ENCODE measurements at regions of chr1 and their contacts with region 1.

Region 1: GRCh38 chr1:206469933-206470691 is at the start of gene IKBKE:
- DNase-seq: peak; percentile 84
- ATAC-seq: peak; percentile 72
- H3K4me3 Mint-ChIP-seq: peak within 1 kb of the TSS; percentile 91
- H3K27ac Mint-ChIP-seq: peak within 1 kb of the TSS; percentile 92
- H3K4me1 Mint-ChIP-seq: peaks cover 88% of the 10 kb centered on the region
- H3K27me3 Mint-ChIP-seq: no peaks in the 10 kb centered on the region
- total RNA-seq, gene IKBKE: 64.8 to 72.7 TPM

Region 2: DNA sequence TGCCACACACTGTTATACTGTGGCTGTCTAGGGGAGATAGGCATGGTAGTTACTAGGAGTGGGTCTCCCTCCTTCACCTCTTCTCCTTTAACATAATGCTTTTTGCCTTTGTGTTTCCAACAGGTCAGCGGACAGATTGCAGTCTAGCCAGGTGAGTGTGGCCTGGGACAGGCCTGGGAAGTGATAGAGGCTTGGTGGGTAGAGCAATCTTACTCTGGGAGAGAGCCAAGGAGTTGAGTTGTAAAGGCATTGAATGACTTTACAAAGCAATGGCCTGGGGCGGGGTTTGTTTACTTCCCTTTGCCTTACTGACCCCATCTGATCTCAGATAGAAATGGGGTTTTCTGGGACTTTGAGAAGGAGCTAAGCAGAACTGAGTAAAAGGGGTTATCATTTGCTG is 50.9 kb before region 1 on chr1:
- CTCF ChIA-PET with region 1: no interaction called
- DNase-seq: peak; percentile 11
- ATAC-seq: no peak
- H3K4me3 Mint-ChIP-seq: no peak overlapping the region
- H3K27ac Mint-ChIP-seq: no peak overlapping the region
- H3K4me1 Mint-ChIP-seq: no peaks in the 10 kb centered on the region
- H3K27me3 Mint-ChIP-seq: no peaks in the 10 kb centered on the region

Region 3: DNA sequence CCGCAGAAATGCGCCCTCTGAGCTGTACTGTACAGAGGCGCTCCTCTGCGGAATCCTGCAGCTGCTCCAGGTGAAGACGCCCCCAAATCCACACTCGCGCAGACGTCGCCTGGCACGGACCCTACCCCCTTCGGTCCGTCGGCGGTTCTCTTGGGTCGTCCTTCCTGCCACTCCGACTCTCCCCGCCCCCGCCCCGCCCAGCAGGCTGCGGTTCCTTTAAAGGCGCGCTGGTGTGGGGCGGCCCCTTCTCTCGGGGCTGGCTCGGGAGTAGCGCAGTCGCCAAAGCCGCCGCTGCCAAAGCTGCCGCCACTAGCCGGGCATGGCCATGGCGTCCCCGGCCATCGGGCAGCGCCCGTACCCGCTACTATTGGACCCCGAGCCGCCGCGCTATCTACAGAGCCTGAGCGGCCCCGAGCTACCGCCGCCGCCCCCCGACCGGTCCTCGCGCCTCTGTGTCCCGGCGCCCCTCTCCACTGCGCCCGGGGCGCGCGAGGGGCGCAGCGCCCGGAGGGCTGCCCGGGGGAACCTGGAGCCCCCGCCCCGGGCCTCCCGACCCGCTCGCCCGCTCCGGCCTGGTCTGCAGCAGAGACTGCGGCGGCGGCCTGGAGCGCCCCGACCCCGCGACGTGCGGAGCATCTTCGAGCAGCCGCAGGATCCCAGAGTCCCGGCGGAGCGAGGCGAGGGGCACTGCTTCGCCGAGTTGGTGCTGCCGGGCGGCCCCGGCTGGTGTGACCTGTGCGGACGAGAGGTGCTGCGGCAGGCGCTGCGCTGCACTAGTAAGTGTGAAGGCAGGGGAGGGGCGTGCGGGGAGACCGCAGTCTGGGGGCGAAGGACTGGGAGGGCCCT is 37.4 kb after region 1 on chr1 and contains the start of gene RASSF5:
- CTCF ChIA-PET with region 1: interaction called, 11 read pairs
- DNase-seq: peak; percentile 90
- ATAC-seq: peak; percentile 87
- H3K4me3 Mint-ChIP-seq: peak within 1 kb of the TSS; percentile 67
- H3K27ac Mint-ChIP-seq: no peak within 1 kb of the TSS
- H3K4me1 Mint-ChIP-seq: peaks cover 48% of the 10 kb centered on the region
- H3K27me3 Mint-ChIP-seq: peaks cover 26% of the 10 kb centered on the region
- total RNA-seq, gene RASSF5: 184 to 216 TPM

Region 4: DNA sequence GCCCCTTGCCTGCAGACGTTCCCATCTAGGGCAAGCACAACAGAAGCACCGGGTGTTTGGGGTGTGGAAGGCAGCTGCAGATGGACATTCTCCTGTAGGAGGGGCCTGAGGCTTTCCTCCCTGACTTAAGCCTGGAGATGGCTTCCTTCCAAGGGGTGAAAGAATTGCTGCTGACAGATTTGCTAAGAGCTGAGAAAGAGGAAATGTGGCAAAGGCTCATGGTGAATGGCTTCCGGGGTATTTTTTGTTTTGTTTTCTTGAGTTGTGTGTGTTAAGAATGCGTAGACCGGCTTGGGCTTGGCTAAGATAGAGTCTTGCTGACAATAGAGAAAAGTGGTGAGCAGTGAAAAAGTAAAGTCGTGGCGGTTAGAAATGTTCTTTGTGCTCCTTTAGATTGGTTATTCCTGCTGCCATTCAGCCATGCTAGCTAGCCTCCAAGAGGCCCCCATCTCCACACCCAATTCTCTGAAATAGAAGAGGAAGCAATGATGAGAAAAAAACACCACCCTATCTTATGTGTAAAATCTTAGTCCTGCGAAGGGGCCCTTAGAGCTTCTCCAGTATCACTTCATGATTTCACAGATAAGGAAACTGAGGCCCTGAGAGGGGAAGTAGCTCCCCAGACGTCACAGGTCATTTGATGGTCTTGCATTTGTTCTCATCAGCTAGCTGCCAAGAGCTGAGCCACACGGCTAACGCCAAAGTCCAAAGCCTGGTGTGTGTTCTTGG is 105.2 kb after region 1 on chr1:
- CTCF ChIA-PET with region 1: interaction called, 13 read pairs
- DNase-seq: peak; percentile 80
- ATAC-seq: peak; percentile 54
- H3K4me3 Mint-ChIP-seq: peak overlapping the region; percentile 70
- H3K27ac Mint-ChIP-seq: peak overlapping the region; percentile 95
- H3K4me1 Mint-ChIP-seq: peaks cover 96% of the 10 kb centered on the region
- H3K27me3 Mint-ChIP-seq: no peaks in the 10 kb centered on the region